PC-9 (cell line): ENCODE measurements at regions of chr1 and their contacts with region 1.

Region 1: GRCh38 chr1:77978969-77979876 is at the start of gene FUBP1:
- DNase-seq: peak; percentile 93 to 97
- H3K4me3 ChIP-seq: peak within 1 kb of the TSS; percentile 80
- H3K27ac ChIP-seq: peak within 1 kb of the TSS; percentile 98
- H3K4me1 ChIP-seq: peaks cover 36% of the 10 kb centered on the region
- H3K27me3 ChIP-seq: no peaks in the 10 kb centered on the region
- CTCF ChIP-seq: peak; percentile 68
- total RNA-seq, gene FUBP1: 101 and 152 TPM in 2 replicates

Region 2: GRCh38 chr1:77926561-77927357 is 52.5 kb before region 1 on chr1:
- CTCF ChIA-PET with region 1: no interaction called
- POLR2A ChIA-PET with region 1: interaction called, 10 read pairs
- intact Hi-C with region 1: no loop called
- DNase-seq: no peak
- H3K4me3 ChIP-seq: no peak overlapping the region
- H3K27ac ChIP-seq: no peak overlapping the region
- H3K4me1 ChIP-seq: no peaks in the 10 kb centered on the region
- H3K27me3 ChIP-seq: no peaks in the 10 kb centered on the region
- CTCF ChIP-seq: no peak

Region 3: DNA sequence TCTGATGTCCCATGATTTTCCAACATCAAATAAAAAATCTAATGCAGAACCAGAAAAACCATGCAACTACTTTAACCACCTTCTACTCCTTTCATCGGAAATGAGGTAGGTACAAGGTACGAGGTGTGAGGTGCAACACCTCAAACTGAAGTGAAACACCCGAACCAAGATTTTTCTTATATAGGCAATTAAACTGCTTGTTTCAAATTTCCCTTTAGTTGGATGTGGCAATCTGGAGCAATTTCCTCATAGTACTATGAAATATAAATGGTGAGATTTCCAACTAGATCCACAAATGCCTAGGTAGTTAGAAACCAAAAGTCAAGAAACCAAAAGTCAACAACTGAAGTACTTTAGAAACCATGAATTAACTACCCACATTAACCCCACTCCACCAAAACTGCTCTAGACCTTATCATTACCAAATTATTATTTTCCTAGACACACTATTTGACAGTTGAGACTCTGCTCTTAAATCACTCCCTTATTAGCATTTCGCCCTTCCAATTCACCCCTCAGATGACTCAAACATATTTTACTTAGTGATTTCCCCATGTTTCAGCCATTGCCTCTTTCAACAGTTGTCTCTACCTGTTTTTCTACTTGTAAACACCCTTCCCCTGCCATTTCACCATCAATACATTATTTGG is 38.2 kb before region 1 on chr1:
- CTCF ChIA-PET with region 1: interaction called, 10 read pairs
- POLR2A ChIA-PET with region 1: no interaction called
- intact Hi-C with region 1: no loop called
- DNase-seq: peak in 1 of 2 experiments; percentile 46
- H3K4me3 ChIP-seq: no peak overlapping the region
- H3K27ac ChIP-seq: no peak overlapping the region
- H3K4me1 ChIP-seq: no peaks in the 10 kb centered on the region
- H3K27me3 ChIP-seq: no peaks in the 10 kb centered on the region
- CTCF ChIP-seq: no peak

Region 4: DNA sequence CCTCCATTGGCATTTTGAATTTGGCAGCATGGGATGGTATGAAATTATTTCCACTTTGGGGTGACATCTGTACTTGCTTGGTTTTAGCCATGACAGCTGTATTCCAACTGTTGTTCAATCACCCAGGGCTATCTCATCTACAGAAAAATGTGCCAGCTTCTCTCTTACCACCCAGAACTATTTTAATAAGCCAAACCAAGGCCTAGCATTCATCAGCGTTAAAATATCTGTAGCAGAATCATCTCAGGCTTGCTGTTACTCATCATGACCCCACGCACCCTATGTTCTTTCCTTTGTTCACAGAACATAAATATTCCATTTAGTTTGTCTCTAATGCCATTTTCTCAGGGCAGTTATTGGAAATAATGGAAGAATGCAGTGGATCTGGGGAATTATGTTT is 116.4 kb after region 1 on chr1:
- CTCF ChIA-PET with region 1: no interaction called
- POLR2A ChIA-PET with region 1: interaction called, 18 read pairs
- intact Hi-C with region 1: no loop called
- DNase-seq: no peak
- H3K4me3 ChIP-seq: no peak overlapping the region
- H3K27ac ChIP-seq: no peak overlapping the region
- H3K4me1 ChIP-seq: peaks cover 13% of the 10 kb centered on the region
- H3K27me3 ChIP-seq: no peaks in the 10 kb centered on the region
- CTCF ChIP-seq: no peak

Region 5: DNA sequence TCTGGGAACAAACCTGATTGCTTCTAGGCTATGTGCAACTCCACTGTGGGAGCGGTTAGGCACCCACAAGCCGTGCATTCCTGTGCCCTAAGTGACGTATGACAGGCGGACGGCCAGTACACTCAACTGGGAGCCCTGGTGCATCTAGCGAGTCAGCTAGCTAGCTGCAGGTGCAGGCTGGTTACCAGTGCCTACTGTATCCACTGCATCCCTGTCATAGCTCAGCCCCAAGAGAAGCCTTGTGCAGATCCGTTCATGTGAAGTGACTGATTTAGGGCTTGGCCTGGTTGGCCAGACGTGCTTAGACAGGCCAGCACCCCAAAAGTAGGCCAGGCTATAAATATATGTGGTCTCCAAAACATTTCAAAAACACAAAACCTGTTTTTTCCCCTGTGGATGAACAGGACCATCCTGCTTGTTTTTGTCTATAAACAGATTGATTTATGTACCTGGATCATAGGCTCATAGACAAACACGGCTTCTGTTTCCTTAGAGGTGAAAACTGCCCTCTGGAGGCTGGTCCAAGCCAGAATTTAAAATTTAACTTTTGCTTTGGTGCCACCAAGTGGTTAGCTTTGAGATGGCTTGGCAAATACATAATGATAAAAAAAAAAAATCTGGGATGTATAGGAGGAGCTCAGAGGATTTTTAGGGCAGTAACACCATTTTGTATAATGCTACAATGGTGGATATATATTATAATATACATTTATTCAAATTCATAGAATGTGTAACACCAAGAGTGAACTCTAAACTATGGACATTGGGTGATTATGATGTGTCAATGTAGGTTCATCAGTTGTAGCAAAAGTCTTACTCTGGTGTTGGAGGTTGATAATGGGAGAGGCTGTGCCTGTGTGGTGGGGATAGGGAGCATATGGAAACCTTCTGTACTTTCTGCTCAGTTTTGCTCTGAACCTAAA is 135.1 kb after region 1 on chr1:
- CTCF ChIA-PET with region 1: interaction called, 11 read pairs
- POLR2A ChIA-PET with region 1: no interaction called
- intact Hi-C with region 1: loop called (anchors 1 kb)
- DNase-seq: peak; percentile 64 to 72
- H3K4me3 ChIP-seq: no peak overlapping the region
- H3K27ac ChIP-seq: no peak overlapping the region
- H3K4me1 ChIP-seq: no peaks in the 10 kb centered on the region
- H3K27me3 ChIP-seq: no peaks in the 10 kb centered on the region
- CTCF ChIP-seq: peak; percentile 92